GM10248 (cell line): ENCODE measurements at regions of chr12 and their contacts with region 1.

Region 1: DNA sequence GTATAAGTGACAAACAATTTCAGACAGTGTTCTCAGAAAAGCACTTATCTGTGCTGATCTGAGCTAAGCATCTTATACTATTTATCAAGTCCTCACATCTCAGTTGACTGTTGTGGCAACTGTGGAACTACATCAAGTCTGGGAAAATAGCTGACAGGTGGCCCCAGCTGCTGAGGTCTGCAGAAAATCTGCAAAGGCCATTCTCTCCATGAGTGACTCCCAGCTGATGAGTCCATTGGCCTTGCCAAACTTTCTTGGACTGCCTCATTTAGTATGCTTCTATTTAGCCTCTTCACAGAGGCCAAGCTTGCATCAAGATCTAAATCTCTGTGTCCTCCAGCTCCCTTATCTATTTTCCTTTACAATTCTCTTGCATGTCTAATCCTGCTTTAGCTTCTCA is 174.5 kb upstream of the RBM19 start:
- DNase-seq: no peak
- CTCF ChIP-seq: no peak

Region 2: GRCh38 chr12:114152890-114153289 is 12.3 kb after region 1 on chr12:
- CTCF ChIA-PET with region 1: interaction called, 10 read pairs
- POLR2A ChIA-PET with region 1: no interaction called
- DNase-seq: no peak
- CTCF ChIP-seq: no peak

Region 3: DNA sequence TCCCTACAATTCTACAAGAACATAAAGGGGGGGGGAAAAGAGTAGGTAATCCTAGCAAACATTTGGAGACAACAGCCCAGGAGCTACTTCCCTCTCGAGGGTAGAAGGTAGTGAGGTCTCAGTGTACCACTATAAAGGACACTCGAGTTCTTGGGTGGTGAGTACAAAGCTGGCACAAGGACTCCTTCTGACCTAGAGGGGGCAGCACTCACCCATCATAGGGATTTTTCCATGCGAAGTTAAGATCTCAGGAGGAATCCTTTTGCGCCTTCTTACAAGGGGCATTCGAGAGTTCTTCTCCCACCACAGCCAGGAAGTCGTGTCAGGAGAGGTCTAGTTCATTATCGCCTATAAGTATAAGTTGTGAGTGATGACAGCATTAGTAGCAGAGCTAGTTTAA is 25.8 kb after region 1 on chr12:
- CTCF ChIA-PET with region 1: interaction called, 15 read pairs
- POLR2A ChIA-PET with region 1: no interaction called
- DNase-seq: peak; percentile 12
- CTCF ChIP-seq: peak; percentile 11